Common myeloid progenitor, CD34-positive (primary cell): ENCODE measurements at regions of chr13 and their contacts with region 1.

Region 1: GRCh38 chr13:49278211-49278610 is 30.5 kb downstream of the CDADC1 start:
- DNase-seq: peak in 2 of 3 donors; percentile 60 to 63
- H3K4me3 ChIP-seq: peak overlapping the region in 1 of 7 experiments; percentile 31
- H3K27ac ChIP-seq: peak overlapping the region in 1 of 2 experiments; percentile 36
- H3K4me1 ChIP-seq: peaks cover 0 to 13% (median 6%) of the 10 kb centered on the region in 4 experiments
- H3K27me3 ChIP-seq: no peaks in the 10 kb centered on the region

Region 2: GRCh38 chr13:48942131-48942530 is 336.1 kb before region 1 on chr13:
- CTCF ChIA-PET with region 1: no interaction called
- POLR2A ChIA-PET with region 1: no interaction called
- DNase-seq: no peak
- H3K4me3 ChIP-seq: no peak overlapping the region
- H3K27ac ChIP-seq: no peak overlapping the region
- H3K4me1 ChIP-seq: no peaks in the 10 kb centered on the region
- H3K27me3 ChIP-seq: no peaks in the 10 kb centered on the region

Region 3: DNA sequence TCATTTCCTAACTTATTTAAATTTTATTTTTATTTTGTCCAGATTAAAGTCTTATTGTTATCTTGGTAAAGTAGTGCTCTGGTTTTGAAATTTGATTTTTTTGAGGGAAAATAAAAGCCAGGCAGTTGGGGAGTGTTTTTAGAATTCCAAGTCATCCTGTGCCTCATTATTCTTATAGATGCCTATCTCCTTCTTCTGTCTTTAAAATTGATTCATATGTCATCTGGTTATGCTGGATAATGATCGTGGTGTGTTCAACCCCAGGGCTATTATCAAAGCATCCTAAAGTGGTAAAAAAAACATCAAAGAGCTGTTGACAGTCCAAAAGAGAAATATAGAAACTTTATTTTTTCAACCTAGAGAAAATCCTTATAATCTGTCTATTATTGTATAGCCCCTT is 308.5 kb before region 1 on chr13:
- CTCF ChIA-PET with region 1: no interaction called
- POLR2A ChIA-PET with region 1: no interaction called
- DNase-seq: no peak
- H3K4me3 ChIP-seq: no peak overlapping the region
- H3K27ac ChIP-seq: no peak overlapping the region
- H3K4me1 ChIP-seq: peaks cover 0 to 4% (median 1%) of the 10 kb centered on the region in 4 experiments
- H3K27me3 ChIP-seq: no peaks in the 10 kb centered on the region

Region 4: GRCh38 chr13:48985756-48986155 is 292.5 kb before region 1 on chr13:
- CTCF ChIA-PET with region 1: no interaction called
- POLR2A ChIA-PET with region 1: no interaction called
- DNase-seq: no peak
- H3K4me3 ChIP-seq: no peak overlapping the region
- H3K27ac ChIP-seq: no peak overlapping the region
- H3K4me1 ChIP-seq: no peaks in the 10 kb centered on the region
- H3K27me3 ChIP-seq: no peaks in the 10 kb centered on the region

Region 5: DNA sequence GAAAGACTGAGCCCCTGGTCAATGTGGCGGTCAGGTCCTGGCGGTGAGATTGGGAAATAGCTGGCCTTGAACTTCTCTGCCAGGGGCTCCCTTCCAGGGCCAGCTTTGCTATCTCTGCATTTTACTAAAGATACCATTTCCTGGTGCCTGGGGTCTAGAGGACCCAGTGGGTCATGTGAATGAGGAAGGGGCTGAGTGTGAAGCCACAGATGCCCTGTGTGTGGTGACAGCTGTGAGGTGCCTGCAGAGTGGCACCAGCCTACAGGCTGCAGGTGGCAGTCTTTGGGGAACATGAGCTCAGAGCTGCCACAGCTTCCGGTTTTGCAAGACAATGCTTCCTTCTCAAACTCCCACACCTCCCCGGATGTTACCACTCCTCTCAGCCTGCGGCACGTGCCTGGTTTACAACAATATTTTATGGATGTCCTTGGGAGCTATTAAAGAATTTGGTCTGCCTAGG is 63.3 kb before region 1 on chr13:
- CTCF ChIA-PET with region 1: interaction called, 16 read pairs
- POLR2A ChIA-PET with region 1: no interaction called
- DNase-seq: peak; percentile 83 to 96 (median 94)
- H3K4me3 ChIP-seq: no peak overlapping the region
- H3K27ac ChIP-seq: no peak overlapping the region
- H3K4me1 ChIP-seq: peaks cover 10 to 33% (median 21%) of the 10 kb centered on the region in 4 experiments
- H3K27me3 ChIP-seq: peaks cover 0 to 16% (median 0%) of the 10 kb centered on the region in 5 experiments

Region 6: DNA sequence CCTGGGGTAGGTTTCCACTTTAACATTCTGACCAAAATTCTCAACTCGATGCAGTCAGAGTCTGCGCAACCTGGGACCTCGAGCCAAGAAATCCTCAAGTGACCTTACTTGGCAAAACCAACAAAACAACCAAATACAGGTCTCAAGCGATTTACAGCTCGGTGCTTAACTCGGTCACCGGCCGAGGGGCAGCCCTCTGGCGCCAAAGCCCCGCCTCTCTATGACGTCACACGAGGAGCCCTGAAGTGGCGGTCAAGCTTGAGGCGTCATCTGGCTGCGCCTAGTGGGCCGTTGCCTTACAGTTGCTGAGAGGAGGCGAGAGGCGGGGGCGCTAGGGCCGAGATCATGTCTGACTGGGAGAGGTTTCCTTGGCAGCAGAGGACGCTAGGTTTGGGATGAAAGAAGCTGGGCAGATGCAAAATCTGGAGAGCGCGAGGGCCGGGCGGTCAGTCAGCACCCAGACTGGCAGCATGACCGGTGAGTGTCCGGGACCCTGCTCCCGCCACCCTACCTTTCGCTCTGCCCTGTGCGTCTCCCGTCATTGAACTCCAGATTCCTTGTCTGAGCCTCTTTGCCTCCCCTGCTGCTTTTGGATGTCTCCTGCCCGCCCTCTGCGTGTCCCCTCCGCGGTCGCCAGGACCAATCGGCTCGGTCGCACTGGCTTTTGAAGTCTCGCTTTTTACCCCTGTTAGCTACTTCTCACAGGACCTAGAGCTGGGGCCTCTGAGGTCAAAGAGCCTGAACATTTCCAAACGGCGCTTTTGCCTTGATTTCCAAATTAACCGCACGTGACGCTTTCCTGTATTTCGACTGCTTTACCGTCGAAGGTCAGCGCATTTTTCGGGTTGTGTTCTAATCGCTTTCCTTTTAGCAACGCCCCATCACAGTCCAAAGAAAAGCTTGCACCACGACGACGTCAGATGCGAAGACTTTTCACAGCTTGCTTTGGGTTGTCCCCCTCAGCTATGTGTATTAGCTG is 30.3 kb before region 1 on chr13 and contains the start of gene CDADC1:
- CTCF ChIA-PET with region 1: interaction called, 53 read pairs
- POLR2A ChIA-PET with region 1: interaction called, 5 read pairs
- DNase-seq: peak; percentile 96 to 97 (median 97)
- H3K4me3 ChIP-seq: peak within 1 kb of the TSS; percentile 83 to 100 (median 96)
- H3K27ac ChIP-seq: peak within 1 kb of the TSS; percentile 90 to 96
- H3K4me1 ChIP-seq: peaks cover 21 to 59% (median 31%) of the 10 kb centered on the region in 4 experiments
- H3K27me3 ChIP-seq: no peaks in the 10 kb centered on the region

Region 7: GRCh38 chr13:49259586-49259985 is 18.6 kb before region 1 on chr13:
- CTCF ChIA-PET with region 1: interaction called, 53 read pairs
- POLR2A ChIA-PET with region 1: interaction called, 3 read pairs
- DNase-seq: no peak
- H3K4me3 ChIP-seq: no peak overlapping the region
- H3K27ac ChIP-seq: no peak overlapping the region
- H3K4me1 ChIP-seq: peaks cover 0 to 32% (median 6%) of the 10 kb centered on the region in 4 experiments
- H3K27me3 ChIP-seq: no peaks in the 10 kb centered on the region

Region 8: DNA sequence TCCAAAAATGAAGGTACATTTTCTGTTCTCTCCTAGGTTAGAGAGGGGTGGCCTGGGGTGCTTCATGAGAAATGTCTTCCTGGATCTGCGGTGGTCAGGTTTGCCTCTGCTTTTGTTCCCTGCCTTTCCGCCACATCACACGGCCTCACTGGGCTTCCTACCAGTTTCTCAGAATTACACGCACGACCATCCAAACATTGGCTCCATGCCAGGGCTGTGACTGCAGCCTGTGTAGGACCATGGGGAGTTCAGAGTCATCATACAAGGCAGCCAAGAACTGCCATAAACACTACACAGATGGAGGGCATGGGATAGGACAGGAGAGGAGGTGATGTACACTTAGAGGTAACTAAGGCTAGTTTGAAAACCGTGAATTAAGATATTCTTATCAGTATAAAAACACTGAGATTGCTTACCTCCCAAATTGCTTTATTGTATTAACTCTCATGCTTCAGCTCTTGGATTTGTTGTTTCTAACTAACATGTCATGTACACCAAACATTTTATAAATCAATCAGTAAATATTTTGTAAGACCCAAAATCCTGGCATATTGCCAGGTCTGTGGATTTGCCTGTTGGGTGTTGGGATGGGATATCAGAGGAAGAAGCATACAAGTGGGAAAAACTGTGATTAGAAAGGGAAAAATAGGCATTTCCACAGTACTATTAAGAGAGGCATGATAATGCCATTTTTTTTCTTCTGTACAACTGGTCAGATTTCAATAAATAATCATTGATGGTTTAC is 14.7 kb after region 1 on chr13:
- CTCF ChIA-PET with region 1: interaction called, 29 read pairs
- POLR2A ChIA-PET with region 1: interaction called, 3 read pairs
- DNase-seq: peak; percentile 55 to 80 (median 77)
- H3K4me3 ChIP-seq: peak overlapping the region in 3 of 7 experiments; percentile 25 to 35 (median 34)
- H3K27ac ChIP-seq: peak overlapping the region; percentile 27 to 59
- H3K4me1 ChIP-seq: peaks cover 4 to 22% (median 16%) of the 10 kb centered on the region in 4 experiments
- H3K27me3 ChIP-seq: no peaks in the 10 kb centered on the region

Region 9: DNA sequence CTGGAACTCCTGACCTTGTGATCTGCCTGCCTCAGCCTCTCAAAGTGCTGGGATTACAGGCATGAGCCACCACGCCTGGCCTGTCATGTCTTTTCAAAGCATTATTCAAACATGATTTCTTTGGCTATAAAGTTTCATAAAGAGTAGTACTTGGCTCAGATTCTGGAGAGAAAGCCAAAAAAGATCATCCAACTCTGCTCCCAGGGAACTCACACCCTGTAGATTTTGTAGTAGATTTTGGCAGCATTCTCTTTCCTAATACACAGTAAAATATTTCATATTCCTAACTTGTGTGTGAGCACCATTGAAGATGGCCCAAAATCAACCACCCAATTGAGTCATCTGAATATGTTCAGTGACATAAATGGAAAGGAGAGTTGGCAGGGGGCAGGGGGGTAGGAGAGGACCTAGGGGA is 117.2 kb after region 1 on chr13:
- CTCF ChIA-PET with region 1: no interaction called
- POLR2A ChIA-PET with region 1: no interaction called
- DNase-seq: no peak
- H3K4me3 ChIP-seq: no peak overlapping the region
- H3K27ac ChIP-seq: no peak overlapping the region
- H3K4me1 ChIP-seq: peaks cover 0 to 2% (median 0%) of the 10 kb centered on the region in 4 experiments
- H3K27me3 ChIP-seq: no peaks in the 10 kb centered on the region